Activated naive CD4-positive, alpha-beta T cell treated with anti-CD3 and anti-CD28 coated beads, Interleukin-2, amount 10 ng/mL, durations not matched to agents 7 days and 5 days (primary cell): ENCODE measurements at regions of chr11 and their contacts with region 1.

Region 1: DNA sequence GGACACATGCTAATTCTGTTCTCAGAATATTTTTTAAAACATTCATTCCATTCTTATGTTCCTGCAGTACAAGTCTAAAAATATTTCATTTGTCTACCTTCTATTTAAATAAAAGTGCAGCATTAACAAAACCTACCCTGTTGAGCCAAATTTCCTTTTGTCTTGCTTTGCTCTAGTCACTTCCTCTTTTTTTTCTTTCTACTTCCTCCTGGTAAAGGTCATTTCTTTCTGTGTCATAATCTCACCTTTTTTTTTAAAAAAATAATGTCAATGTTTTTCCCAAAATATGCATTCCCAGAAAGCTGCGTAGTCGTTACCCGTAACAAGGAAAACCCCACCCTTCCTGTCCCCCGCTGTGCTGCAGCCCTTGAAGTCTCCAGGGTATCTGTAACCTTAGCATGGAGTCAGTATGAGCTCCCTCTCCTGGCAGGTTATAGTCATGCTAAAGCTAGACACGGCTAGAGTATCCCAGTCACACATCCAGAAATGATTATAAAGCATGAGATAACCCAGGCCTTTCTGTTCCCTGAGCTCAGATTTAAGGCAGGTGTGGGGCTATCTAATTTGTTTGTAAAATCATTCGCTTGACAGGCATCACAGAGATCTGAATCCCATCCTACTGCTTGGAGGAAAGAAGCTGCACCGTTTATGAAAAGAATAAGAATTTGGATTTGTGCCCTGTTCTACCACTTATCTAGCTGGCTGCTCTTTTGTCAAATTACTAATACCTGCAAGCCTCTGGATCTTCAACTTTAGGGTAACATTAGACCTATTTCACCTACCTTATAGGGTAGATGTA is 51.1 kb upstream of the EED start:
- DNase-seq: peak; percentile 77
- H3K4me3 Mint-ChIP-seq: peak overlapping the region; percentile 62
- H3K27ac Mint-ChIP-seq: peak overlapping the region; percentile 86
- H3K4me1 Mint-ChIP-seq: peaks cover 28% of the 10 kb centered on the region
- H3K27me3 Mint-ChIP-seq: peaks cover 5% of the 10 kb centered on the region

Region 2: GRCh38 chr11:86041975-86042378 is 151.5 kb before region 1 on chr11:
- CTCF ChIA-PET with region 1: interaction called, 67 read pairs
- DNase-seq: peak; percentile 60
- H3K4me3 Mint-ChIP-seq: no peak overlapping the region
- H3K27ac Mint-ChIP-seq: no peak overlapping the region
- H3K4me1 Mint-ChIP-seq: peaks cover 52% of the 10 kb centered on the region
- H3K27me3 Mint-ChIP-seq: no peaks in the 10 kb centered on the region

Region 3: DNA sequence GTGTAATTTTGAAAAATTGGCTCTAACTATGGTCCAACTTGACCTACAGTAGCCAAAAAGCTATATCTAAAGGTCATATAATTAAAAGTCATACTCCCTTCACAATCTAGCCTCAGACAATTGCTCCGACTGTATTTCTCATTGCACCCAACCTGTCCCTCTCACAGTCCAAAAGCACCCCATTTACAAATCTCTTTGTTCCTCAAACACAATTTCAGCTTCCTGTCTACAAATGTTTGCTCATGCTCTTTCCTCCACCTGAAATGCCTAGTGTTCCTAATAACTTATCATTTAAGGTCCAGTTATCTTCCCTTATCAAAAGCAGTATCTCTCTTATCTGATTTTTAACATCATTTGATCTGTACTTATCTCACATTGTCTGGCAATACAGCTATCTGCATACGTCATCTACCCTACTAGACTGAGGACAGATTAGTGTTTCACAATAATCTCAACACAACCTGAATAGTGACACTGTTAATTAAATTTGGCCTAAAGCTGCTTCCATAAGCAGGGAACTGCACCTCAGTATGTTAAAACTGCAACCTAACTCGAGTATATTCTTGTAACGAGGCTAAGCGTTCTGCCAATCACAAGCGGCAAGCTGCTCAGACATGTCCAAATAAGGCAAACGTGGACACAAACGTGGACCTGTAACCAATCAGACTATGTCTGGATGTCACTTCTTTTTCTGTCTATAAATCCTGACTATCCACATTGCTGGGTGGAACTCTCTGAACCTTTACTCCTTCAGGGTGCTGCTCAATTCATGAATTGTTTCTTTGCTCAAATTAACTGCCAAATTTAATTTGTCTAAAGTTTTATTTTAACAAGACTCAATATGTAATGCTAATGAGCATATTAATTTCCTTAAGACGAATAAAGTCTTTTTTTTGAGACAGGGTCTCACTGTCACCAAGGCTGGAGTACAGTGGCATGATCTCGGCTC is 140.5 kb before region 1 on chr11:
- CTCF ChIA-PET with region 1: interaction called, 12 read pairs
- DNase-seq: no peak
- H3K4me3 Mint-ChIP-seq: no peak overlapping the region
- H3K27ac Mint-ChIP-seq: no peak overlapping the region
- H3K4me1 Mint-ChIP-seq: peaks cover 65% of the 10 kb centered on the region
- H3K27me3 Mint-ChIP-seq: no peaks in the 10 kb centered on the region

Region 4: GRCh38 chr11:86068951-86069407 is 124.5 kb before region 1 on chr11 and contains the start of gene PICALM:
- CTCF ChIA-PET with region 1: interaction called, 47 read pairs
- DNase-seq: peak; percentile 98
- H3K4me3 Mint-ChIP-seq: peak within 1 kb of the TSS; percentile 99
- H3K27ac Mint-ChIP-seq: peak within 1 kb of the TSS; percentile 94
- H3K4me1 Mint-ChIP-seq: peaks cover 33% of the 10 kb centered on the region
- H3K27me3 Mint-ChIP-seq: no peaks in the 10 kb centered on the region

Region 5: DNA sequence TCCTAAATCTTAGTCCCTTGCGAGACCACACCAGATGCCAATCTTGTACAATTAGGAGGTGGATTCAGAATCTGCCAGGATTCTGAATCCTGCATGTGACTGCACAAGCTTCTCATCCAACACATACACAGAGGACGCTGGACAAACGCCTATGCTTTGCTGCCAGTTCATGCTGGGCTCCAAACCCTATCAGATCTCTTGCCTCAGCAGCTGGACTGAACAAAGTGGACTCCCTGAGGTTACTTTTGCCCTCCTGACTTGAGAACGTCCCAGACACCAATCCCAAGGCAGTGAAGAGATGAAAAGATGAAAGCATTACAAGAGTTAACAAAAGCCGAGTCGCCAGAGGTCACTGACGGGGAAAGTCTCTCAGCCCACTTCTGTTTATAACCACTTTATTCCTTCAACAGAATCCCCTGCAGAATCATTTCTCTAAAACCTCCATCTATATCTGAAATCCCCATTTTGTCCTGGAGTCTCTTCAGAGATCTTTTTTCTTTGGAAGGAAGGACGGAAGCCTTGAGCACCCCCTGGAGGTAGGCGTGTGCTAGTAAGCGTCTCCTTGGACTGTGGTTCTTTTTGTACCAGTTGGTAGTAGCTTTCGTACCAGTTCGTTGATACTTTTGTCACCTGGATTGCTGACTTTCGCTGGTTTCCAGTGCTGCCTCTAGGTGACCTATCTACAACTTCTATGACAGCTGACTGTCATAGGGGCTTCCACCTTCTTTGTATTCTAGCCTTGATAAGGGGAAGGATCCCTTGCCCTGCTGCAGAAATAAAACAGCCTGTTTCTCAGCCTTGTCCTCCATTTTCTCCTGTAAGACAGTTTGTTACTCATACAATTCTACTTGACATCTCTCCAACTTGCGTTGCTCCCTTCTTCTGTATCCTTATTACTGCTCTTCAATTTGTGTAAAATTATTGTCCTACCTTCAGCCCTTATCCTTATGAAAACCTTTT is 24.9 kb after region 1 on chr11:
- CTCF ChIA-PET with region 1: interaction called, 23 read pairs
- DNase-seq: peak; percentile 73
- H3K4me3 Mint-ChIP-seq: peak overlapping the region; percentile 48
- H3K27ac Mint-ChIP-seq: no peak overlapping the region
- H3K4me1 Mint-ChIP-seq: peaks cover 28% of the 10 kb centered on the region
- H3K27me3 Mint-ChIP-seq: no peaks in the 10 kb centered on the region